ENCODE measurements at regions of chr17 and their contacts with region 1.

Region 1: DNA sequence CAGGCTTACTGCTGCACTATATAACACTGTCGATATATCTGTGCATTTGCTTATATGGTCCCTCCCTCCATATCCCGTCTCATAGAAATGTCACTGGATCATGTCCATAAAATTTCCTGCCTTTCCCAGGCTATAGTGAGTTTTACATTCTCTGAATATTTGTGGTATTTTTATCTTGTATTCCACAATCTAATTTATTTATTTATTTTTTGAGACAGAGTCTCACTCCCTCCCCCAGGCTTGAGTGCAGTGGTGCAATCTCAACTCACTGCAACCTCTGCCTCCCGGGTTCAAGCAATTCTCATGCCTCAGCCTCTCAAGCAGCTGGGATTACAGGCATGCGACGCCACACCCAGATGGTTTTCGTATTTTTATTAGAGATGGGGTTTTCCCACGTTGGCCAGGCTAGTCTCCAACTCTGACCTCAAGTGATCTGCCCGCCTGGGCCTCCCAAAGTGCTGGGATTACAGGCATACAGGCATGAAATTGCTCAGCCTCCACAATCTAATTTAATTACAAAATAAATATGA is 12.9 kb downstream of the TRIM37 start:
- DNase-seq: peak; percentile 93
- H3K4me3 ChIP-seq: peak overlapping the region in 1 of 3 experiments; percentile 25
- H3K27ac ChIP-seq: peak overlapping the region; percentile 83
- H3K4me1 ChIP-seq: peaks cover 27% of the 10 kb centered on the region
- H3K27me3 ChIP-seq: no peaks in the 10 kb centered on the region
- CTCF ChIP-seq: no peak
- POLR2A ChIP-seq: no peak

Region 2: DNA sequence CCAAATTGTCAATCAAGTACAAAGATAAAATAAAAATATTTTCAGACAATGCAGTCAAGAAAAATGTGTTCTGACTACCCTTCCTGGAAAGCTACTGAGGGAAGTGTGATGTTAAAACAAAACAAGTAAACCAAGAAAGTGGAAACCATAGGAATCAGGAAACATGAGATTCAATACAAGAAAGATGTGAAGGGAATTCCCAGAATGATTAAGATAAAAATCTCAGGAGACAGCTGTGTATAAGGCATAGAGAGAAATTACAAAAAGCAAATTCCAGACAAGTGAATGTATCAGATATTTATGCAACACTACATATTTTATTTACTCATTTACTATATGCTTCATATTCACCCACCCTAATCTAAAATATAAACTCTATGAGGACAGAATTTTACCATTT is 19.3 kb before region 1 on chr17:
- CTCF ChIA-PET with region 1: interaction called, 3 read pairs
- POLR2A ChIA-PET with region 1: interaction called, 7 read pairs
- dilution Hi-C with region 1: no loop called
- intact Hi-C with region 1: loop called (anchors 1 kb)
- DNase-seq: peak; percentile 86
- H3K4me3 ChIP-seq: no peak overlapping the region
- H3K27ac ChIP-seq: peak overlapping the region; percentile 84
- H3K4me1 ChIP-seq: peaks cover 15% of the 10 kb centered on the region
- H3K27me3 ChIP-seq: no peaks in the 10 kb centered on the region
- CTCF ChIP-seq: no peak
- POLR2A ChIP-seq: no peak

Region 3: DNA sequence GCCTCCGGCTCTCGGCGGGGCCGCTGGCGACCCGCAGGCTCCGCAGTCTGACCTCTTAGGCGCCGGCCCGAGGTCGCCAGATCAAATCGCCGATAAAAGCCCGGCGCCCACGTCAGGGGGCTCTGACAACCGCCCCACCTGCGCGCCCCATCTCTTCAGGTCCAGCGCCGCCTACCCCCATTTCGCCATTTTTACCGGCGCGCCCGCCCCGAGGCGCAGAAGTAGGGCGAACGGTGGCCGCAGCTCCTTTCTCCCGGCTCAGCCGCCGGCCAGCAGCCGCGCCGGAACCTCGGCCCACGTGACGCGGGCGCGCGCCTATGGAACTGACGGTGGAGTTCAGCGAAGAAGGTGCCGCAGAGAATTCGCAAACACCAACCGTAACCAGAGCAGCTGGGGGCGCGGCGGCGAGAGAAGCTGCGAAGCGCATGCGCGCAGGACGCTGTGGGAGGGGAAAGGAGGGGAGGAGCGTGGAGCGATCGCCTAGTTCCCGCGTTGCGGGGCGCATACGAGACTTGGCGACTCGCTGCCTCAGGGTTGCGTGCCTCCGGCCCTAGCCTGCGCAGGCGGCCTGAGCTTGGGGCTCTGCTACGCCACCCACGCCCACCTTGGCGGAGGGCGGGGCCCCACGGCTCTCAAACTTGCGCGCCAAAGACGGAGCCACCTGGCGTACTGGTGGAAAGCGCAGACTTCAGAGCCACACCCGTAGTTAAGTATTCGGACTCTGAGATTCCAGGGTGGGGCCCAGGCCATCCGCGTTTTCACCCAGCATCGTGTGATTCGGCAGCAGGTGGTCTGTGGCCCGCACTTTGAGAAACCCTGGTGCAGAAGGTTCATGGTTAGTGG is 12.9 kb after region 1 on chr17 and contains the start of gene TRIM37:
- CTCF ChIA-PET with region 1: interaction called, 6 read pairs
- POLR2A ChIA-PET with region 1: no interaction called
- dilution Hi-C with region 1: no loop called
- intact Hi-C with region 1: loop called (anchors 1 kb)
- DNase-seq: peak; percentile 100
- H3K4me3 ChIP-seq: peak within 1 kb of the TSS; percentile 29 to 91 (median 77)
- H3K27ac ChIP-seq: peak within 1 kb of the TSS; percentile 63
- H3K4me1 ChIP-seq: peaks cover 18% of the 10 kb centered on the region
- H3K27me3 ChIP-seq: no peaks in the 10 kb centered on the region
- CTCF ChIP-seq: no peak
- POLR2A ChIP-seq: peak; percentile 72
- total RNA-seq, gene TRIM37: 37.1 and 41.9 TPM in 2 replicates

Measured in endothelial cell of umbilical vein (primary cell).